ENCODE measurements at regions of chr20 and their contacts with region 1.

Region 1: DNA sequence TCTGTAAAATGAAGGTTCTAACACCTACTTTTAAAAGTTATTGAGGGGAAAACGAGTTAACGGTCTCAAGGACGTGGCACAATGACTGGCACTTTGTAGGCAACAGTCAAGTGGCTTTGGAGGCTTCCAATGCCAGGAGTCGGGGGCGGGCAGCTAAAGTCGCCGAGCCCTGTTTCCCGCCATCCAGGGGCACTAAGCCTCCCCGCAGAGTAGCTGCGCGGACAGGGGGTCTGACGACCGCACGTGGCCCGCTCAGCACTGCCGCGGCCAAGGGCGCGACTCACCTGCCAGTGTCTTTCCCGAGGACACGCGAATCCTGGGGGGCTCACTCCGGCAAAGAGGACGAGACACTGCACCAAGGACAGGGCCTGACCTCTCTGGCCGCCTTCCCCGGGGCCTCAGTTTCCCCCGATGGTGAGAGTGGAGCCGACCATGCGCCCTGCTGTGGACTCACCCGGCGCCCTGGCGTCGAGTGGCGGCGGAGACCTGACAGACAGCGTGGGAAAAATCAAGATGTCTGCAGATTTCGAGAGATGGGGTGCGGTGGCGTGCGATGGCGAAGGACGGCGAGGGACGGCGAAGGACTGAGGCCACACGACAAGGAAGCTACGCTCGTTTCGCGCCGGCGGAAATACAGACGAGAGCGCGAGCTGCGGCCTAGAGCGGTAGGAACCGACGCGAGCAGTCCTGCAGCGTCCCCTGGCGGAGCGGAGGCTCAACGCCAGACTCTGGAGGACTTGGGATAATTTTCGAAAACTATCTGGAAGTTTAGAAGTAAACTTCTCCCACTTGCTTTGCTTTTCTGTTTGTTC is at the start of gene SNHG17:
- DNase-seq: peak; percentile 92 to 94
- ATAC-seq: peak; percentile 90 to 93 (median 92)
- H3K4me3 ChIP-seq: peak within 1 kb of the TSS; percentile 90
- H3K27ac ChIP-seq: peak within 1 kb of the TSS; percentile 89
- H3K4me1 ChIP-seq: peaks cover 9% of the 10 kb centered on the region
- H3K27me3 ChIP-seq: no peaks in the 10 kb centered on the region
- CTCF ChIP-seq: peak; percentile 99
- total RNA-seq, gene SNHG17: 4.6 to 26.0 (median 14.8) TPM

Region 2: DNA sequence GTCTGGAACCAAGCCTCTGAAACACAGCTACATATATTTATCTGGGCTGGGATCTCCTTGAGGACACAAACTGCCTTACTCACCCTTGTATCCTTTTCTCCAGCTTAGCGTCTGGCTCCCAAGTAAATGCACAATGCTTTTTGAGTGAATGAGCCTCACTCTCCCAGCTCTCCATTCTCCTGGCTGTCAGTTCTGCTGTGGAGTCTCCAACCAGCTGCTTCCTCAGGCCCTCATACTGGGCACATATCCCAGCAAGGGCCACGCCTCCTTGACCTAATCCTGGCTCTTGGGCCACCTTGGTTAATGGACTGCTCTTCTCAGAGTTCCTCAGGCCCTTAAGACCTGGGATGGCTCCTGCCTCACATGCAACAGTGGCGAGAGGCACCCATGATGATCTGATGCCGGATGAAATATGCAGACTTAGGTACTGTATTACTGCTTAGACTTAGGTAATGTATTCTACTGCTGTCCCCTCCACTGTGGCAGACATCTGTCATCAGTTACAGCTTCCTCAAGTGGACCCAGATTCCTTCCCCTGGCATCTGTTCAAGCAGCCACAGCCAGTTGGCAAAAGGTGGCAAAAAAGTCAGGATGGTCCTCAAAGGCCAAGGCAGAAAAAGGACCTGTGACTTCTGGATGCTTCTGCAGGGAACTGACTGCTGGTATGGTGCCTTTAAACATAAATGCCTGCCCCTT is 16.3 kb before region 1 on chr20:
- intact Hi-C with region 1: no loop called
- DNase-seq: peak; percentile 60 to 81
- ATAC-seq: peak; percentile 85 to 93 (median 88)
- H3K4me3 ChIP-seq: no peak overlapping the region
- H3K27ac ChIP-seq: peak overlapping the region; percentile 36
- H3K4me1 ChIP-seq: no peaks in the 10 kb centered on the region
- H3K27me3 ChIP-seq: no peaks in the 10 kb centered on the region
- CTCF ChIP-seq: no peak

Region 3: DNA sequence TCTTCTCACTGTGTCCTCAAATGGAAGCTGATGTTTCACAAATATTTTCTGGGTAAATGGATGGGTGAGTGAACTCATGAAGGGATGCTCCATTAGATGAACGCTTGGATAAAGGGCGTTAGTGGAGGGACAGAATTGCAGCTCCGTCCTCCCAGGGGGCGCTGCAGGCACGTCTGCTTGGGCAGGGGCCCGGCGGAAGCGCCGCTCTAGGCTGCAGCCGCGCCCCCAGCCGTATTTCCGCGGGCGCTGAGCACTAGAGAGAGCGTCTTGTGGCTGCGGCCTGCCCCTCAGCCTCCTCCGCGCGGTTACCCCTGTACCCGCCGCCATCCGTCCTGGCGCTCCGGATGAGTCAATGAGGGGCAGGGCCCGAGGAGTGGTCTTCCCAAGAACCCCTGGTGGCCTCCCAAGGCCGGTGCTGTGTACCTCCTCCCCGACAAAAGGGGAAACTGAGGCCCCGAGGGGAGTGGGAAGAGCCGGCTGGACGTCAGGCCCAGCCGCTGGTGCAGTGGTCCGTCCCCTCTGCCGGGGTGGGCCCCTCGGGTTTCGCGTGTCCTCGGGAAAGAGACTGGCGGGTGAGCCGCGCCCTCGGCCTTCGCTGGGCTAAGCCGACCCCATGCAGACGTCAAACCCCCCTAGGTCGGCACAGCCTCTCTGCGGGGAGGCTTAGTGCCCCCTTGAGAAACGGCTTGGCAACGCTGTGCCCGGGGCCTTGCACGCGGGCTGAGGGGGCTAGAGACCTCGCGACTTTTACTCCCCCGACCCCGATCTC is 11.7 kb after region 1 on chr20:
- intact Hi-C with region 1: loop called in 1 of 2 experiments (anchors 1 kb)
- DNase-seq: peak; percentile 95 to 96
- ATAC-seq: peak; percentile 92 to 97 (median 94)
- H3K4me3 ChIP-seq: peak overlapping the region; percentile 93
- H3K27ac ChIP-seq: peak overlapping the region; percentile 78
- H3K4me1 ChIP-seq: peaks cover 14% of the 10 kb centered on the region
- H3K27me3 ChIP-seq: no peaks in the 10 kb centered on the region
- CTCF ChIP-seq: peak; percentile 84

Measured in psoas muscle (tissue), 8 donors.